ENCODE measurements at regions of chr11 and their contacts with region 1.

Region 1: DNA sequence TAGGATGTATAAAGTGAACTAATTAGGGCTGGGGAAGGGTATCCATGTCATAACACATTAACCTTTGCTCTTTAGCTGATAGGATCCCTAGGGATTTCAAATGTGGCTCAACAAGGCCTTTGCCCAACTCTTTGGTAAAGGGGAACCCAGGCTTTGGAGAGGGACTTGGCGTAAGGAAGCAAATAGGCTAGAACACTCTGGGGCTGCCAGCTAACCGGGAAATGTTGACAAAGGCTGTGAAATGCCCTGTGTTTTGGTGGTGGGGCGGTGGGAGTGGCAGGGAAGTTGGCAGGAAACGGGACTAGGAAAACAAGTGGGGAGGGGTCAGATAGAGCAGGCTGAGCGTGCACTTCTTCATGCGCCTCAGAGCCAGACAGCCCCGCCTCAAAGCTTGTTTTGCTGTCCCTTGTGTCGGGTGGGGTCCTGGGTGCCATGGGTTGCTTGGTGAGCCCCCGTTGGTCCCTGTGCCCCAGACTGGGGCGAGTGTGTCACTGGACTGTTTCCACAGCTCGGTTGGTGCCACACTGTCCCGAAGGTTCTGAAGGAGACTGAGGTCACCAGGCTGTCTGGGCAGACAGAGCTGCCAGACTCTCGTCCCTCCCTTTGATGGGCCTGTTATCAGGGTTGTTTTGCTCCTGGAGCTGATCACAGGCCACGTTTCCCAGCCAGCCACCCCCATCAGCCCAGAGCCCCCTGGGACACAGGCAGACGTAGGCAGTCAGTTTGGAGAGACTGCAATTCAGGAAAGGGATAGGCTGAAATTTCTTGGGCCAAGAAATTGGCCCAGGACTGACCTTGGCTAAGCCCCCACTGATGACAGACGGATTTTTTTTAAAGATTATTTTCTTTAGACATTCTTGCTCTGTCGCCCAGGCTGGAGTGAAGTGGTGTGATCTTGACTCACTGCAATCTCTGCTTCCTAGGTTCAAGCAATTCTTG is 19.6 kb downstream of the KCTD21 start:
- DNase-seq: no peak
- ATAC-seq: no peak
- H3K4me3 ChIP-seq: no peak overlapping the region
- H3K4me3 Mint-ChIP-seq: no peak overlapping the region
- H3K27ac ChIP-seq: no peak overlapping the region
- H3K27ac Mint-ChIP-seq: no peak overlapping the region
- H3K4me1 ChIP-seq: no peaks in the 10 kb centered on the region
- H3K4me1 Mint-ChIP-seq: no peaks in the 10 kb centered on the region
- H3K27me3 ChIP-seq: no peaks in the 10 kb centered on the region
- H3K27me3 Mint-ChIP-seq: no peaks in the 10 kb centered on the region

Region 2: GRCh38 chr11:78127401-78127800 is 41.4 kb before region 1 on chr11:
- CTCF ChIA-PET with region 1: no interaction called
- POLR2A ChIA-PET with region 1: no interaction called
- DNase-seq: no peak
- ATAC-seq: no peak
- H3K4me3 ChIP-seq: no peak overlapping the region
- H3K4me3 Mint-ChIP-seq: no peak overlapping the region
- H3K27ac ChIP-seq: no peak overlapping the region
- H3K27ac Mint-ChIP-seq: no peak overlapping the region
- H3K4me1 ChIP-seq: no peaks in the 10 kb centered on the region
- H3K4me1 Mint-ChIP-seq: peaks cover 0 to 6% (median 0%) of the 10 kb centered on the region in 3 donors
- H3K27me3 ChIP-seq: no peaks in the 10 kb centered on the region
- H3K27me3 Mint-ChIP-seq: no peaks in the 10 kb centered on the region

Region 3: DNA sequence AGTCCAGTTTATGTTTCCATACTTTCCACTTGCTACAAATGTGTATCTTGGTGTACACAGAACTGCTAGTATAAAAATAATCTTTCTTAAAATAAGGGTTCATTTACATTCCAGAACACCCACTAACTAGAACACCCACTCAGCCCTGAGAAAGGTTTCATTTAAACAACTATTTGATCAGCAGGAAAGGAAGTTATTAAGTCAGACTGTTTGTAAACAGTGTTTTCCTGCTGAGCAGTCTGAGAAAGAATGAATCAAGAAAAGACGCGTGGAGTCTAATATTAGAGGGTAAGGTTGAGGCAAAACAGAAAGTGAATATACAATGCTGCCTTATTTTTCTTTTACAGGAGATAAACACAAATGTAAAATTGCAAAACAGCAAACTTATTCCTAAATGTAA is 373.2 kb after region 1 on chr11:
- CTCF ChIA-PET with region 1: no interaction called
- POLR2A ChIA-PET with region 1: interaction called in 1 of 2 experiments, 12 read pairs
- DNase-seq: no peak
- ATAC-seq: no peak
- H3K4me3 ChIP-seq: no peak overlapping the region
- H3K4me3 Mint-ChIP-seq: no peak overlapping the region
- H3K27ac ChIP-seq: no peak overlapping the region
- H3K27ac Mint-ChIP-seq: no peak overlapping the region
- H3K4me1 ChIP-seq: no peaks in the 10 kb centered on the region
- H3K4me1 Mint-ChIP-seq: peaks cover 5 to 13% (median 6%) of the 10 kb centered on the region in 3 donors
- H3K27me3 ChIP-seq: no peaks in the 10 kb centered on the region
- H3K27me3 Mint-ChIP-seq: no peaks in the 10 kb centered on the region

Measured in T-cell (primary cell).